Ascending aorta (tissue), 2 donors: ENCODE measurements at regions of chr3 and their contacts with region 1.

Region 1: DNA sequence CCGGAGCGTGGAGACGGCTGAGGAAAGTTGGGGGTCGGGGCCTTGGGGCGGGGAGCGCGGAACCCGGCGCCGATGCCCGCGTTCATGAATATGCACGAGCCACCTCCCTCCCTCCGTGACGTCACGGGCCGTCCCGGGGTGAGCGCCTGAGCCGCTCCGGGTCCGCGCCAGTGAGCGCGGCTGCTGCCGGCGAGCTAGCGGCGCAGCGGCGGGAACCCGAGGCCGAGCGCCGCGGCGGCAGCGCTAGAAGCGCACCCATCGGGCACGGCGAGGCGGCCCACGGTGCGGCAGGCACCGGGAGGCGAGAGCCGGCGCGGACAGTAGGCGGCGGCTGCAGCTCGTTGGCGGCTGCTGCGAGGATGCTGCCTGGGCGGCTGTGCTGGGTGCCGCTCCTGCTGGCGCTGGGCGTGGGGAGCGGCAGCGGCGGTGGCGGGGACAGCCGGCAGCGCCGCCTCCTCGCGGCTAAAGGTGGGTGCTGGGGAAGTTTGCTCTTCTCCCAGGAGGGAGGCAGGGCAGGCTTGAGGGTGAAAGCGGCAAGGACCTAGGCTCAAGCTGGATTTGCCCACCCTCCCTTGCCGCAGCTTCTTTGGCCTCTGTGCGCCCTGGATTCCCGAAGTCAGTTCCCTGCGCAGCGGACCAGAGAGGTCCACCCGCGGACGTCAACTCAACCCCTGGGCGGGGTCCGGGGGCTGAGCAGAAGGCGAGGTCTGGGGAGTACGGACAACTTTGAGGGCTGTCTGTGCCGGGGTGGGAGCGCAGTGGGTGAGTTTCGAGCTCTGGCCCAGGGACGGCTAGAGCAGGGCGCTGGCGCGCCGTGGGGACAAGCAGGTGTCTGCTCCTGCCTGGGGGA is at the start of gene CLSTN2:
- DNase-seq: peak in 1 of 2 donors; percentile 68
- H3K4me3 ChIP-seq: peak within 1 kb of the TSS; percentile 67 to 72
- H3K27ac ChIP-seq: no peak within 1 kb of the TSS
- H3K4me1 ChIP-seq: peaks cover 0 to 2% of the 10 kb centered on the region in 2 donors
- H3K27me3 ChIP-seq: no peaks in the 10 kb centered on the region
- CTCF ChIP-seq: no peak
- total RNA-seq, gene CLSTN2: 65.8 TPM

Region 2: DNA sequence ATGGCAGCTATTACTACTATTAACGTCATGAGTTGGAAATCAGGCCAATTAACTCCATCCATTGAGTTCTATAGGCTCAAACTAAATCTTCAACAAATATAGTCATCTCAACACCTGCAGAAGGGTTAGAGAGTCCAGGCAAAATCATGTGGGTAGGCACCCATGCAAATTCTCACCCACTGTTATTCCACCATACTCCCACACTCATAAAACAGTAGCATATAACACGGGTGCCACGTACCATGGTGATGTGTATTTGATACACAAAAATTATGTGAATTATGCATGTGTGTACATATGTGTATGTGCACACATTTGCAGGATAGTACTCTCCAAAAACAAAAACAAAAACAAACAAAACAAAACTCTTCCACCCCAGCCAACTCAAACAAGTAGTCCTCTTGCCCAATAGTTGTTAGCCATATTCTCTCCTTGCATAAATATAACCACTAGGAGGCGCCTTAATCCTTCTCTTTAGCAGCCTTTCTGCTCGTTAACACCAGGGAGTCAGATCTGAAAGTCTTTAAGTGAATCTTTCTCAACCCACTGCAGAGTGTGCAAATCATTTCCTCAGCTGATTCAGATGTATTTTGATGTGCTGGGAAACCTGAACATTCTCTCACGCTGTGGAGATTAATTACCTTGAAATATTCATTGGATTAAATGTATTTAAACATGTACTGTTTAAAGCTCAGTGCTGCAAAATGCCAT is 507.8 kb before region 1 on chr3:
- intact Hi-C with region 1: loop called (anchors 5 kb)
- DNase-seq: no peak
- H3K4me3 ChIP-seq: no peak overlapping the region
- H3K27ac ChIP-seq: no peak overlapping the region
- H3K4me1 ChIP-seq: no peaks in the 10 kb centered on the region
- H3K27me3 ChIP-seq: no peaks in the 10 kb centered on the region
- CTCF ChIP-seq: peak; percentile 54 to 81 (median 66)

Region 3: DNA sequence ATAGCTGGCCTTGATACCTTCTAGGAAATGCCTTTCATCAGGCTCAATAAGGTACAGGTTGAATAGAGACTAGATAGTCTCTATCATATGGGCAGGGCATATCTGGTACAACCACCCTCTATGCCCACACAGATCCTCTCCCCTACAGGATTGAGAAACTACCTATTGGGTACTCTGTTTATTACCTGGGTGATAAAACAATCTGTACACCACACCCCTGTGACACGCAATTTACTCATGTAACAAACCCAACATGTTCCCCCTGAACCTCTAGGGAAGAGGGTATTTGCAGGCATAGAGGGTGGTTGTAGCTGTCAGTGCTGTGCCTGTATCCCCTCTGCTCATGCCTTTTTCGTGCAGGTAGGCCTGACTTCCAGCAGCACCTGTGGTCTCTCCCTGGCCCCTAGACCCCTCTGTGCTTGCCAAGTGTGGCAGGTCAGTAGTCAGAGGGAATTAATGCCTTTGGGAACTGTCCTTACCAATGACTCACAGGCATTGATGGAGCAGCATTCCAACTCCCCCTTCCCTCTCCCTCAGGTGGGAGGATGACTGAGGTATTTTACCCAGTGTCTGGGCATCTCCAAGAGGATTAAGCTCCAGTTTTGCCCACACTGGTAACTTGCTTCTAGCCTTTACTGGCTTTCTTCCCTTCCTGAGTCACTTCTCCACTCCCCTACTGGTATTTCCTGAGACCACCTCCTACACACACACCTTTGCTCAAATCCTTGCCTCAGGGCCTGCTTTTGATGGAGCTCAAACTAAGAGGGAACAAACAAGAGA is 18.1 kb after region 1 on chr3:
- intact Hi-C with region 1: no loop called
- DNase-seq: no peak
- H3K4me3 ChIP-seq: no peak overlapping the region
- H3K27ac ChIP-seq: no peak overlapping the region
- H3K4me1 ChIP-seq: no peaks in the 10 kb centered on the region
- H3K27me3 ChIP-seq: no peaks in the 10 kb centered on the region
- CTCF ChIP-seq: no peak

Region 4: GRCh38 chr3:140051019-140051957 is 116.0 kb after region 1 on chr3:
- intact Hi-C with region 1: loop called (anchors 5 kb)
- DNase-seq: no peak
- H3K4me3 ChIP-seq: no peak overlapping the region
- H3K27ac ChIP-seq: no peak overlapping the region
- H3K4me1 ChIP-seq: no peaks in the 10 kb centered on the region
- H3K27me3 ChIP-seq: no peaks in the 10 kb centered on the region
- CTCF ChIP-seq: peak in 2 of 3 experiments; percentile 11 to 23

Region 5: GRCh38 chr3:140736863-140737460 is 801.7 kb after region 1 on chr3:
- intact Hi-C with region 1: loop called (anchors 10 kb)
- DNase-seq: no peak
- H3K4me3 ChIP-seq: no peak overlapping the region
- H3K27ac ChIP-seq: no peak overlapping the region
- H3K4me1 ChIP-seq: no peaks in the 10 kb centered on the region
- H3K27me3 ChIP-seq: no peaks in the 10 kb centered on the region
- CTCF ChIP-seq: peak in 1 of 3 experiments; percentile 38

Region 6: GRCh38 chr3:140863580-140864009 is 928.4 kb after region 1 on chr3:
- intact Hi-C with region 1: loop called (anchors 10 kb)
- DNase-seq: no peak
- H3K4me3 ChIP-seq: no peak overlapping the region
- H3K27ac ChIP-seq: no peak overlapping the region
- H3K4me1 ChIP-seq: no peaks in the 10 kb centered on the region
- H3K27me3 ChIP-seq: no peaks in the 10 kb centered on the region
- CTCF ChIP-seq: peak in 1 of 3 experiments; percentile 31